ENCODE measurements at regions of chr9 and their contacts with region 1.

Region 1: DNA sequence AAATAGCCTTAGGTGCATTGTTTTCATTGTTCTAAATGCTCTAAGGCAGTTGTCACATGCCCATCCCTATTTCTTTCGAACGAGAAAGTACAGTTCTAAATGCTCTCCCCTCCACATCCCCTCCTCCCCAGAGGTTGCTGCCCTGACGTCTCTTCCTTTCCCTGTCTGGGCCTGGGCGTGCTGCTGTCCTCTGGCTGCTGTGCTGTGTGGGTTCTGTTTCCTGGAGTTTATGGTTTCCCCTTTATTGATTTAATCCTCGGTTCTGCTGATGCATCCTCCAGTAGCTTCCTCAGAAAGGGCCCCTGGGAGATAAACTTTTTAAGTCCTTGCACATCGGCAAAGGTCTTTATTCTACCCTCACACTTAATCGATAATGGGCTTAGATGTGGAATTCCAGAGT is 48.8 kb downstream of the MVB12B start:
- DNase-seq: no peak
- H3K4me3 ChIP-seq: peak overlapping the region in 8 of 59 donors; percentile 2 to 45 (median 10)
- H3K27ac ChIP-seq: peak overlapping the region; percentile 43 to 99 (median 96)
- H3K27me3 ChIP-seq: no peaks in the 10 kb centered on the region
- CTCF ChIP-seq: peak in 10 of 56 donors; percentile 12 to 33 (median 29)

Region 2: GRCh38 chr9:126307322-126308061 is 67.9 kb before region 1 on chr9:
- intact Hi-C with region 1: loop called (anchors 5 kb)
- DNase-seq: peak; percentile 20 to 94 (median 84)
- H3K4me3 ChIP-seq: peak overlapping the region in 1 of 59 donors; percentile 9
- H3K27ac ChIP-seq: peak overlapping the region; percentile 66 to 100 (median 94)
- H3K27me3 ChIP-seq: no peaks in the 10 kb centered on the region
- CTCF ChIP-seq: peak in 7 of 56 donors; percentile 8 to 35 (median 17)

Region 3: GRCh38 chr9:126334721-126335621 is 40.4 kb before region 1 on chr9:
- intact Hi-C with region 1: loop called (anchors 2 to 5 kb)
- DNase-seq: no peak
- H3K4me3 ChIP-seq: peak overlapping the region in 7 of 59 donors; percentile 3 to 30 (median 15)
- H3K27ac ChIP-seq: peak overlapping the region in 58 of 59 donors; percentile 24 to 99 (median 94)
- H3K27me3 ChIP-seq: no peaks in the 10 kb centered on the region
- CTCF ChIP-seq: no peak

Measured in dorsolateral prefrontal cortex (tissue), 120 donors.